ENCODE measurements at regions of chr20 and their contacts with region 1.

Region 1: DNA sequence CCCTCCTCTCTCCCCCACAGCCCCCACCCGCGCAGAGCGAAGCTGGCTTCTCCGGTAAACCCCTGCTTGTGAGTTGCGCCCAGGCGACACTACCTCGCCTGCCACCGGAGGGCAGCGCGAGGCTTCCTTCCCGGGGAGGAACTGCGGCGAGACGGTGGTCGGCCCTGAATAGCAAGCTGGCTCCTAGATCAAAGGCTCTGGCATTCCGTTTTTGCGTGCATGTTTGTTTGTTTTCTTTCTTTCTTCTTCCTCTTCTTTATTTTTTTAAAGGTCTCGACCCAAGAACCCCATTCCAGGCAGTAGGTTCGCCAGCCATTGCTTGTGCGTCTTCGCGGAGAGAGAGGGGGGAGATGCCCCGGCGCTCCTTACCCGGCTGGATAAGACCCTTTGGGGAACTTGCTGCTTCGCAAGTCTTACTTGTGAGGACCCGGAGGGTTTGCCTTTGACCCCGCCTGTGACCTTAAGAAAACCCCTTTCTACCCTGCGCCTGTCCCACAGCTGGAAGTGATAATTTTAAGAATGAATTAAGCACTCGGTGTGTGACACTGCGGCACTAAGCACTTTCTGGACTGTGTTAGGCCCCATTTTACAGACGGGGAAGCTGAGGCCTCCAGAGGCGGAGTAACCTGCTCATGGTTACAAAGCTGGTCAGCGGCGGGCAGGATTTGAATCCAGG is 92.7 kb upstream of the SIRPA start:
- DNase-seq: peak; percentile 79 to 80
- H3K4me3 ChIP-seq: peak overlapping the region; percentile 64
- H3K4me3 Mint-ChIP-seq: peak overlapping the region; percentile 74
- H3K27ac Mint-ChIP-seq: no peak overlapping the region
- H3K4me1 ChIP-seq: peaks cover 34% of the 10 kb centered on the region
- H3K4me1 Mint-ChIP-seq: peaks cover 31% of the 10 kb centered on the region
- H3K27me3 ChIP-seq: no peaks in the 10 kb centered on the region
- H3K27me3 Mint-ChIP-seq: no peaks in the 10 kb centered on the region
- CTCF ChIP-seq: peak; percentile 78 to 94

Region 2: DNA sequence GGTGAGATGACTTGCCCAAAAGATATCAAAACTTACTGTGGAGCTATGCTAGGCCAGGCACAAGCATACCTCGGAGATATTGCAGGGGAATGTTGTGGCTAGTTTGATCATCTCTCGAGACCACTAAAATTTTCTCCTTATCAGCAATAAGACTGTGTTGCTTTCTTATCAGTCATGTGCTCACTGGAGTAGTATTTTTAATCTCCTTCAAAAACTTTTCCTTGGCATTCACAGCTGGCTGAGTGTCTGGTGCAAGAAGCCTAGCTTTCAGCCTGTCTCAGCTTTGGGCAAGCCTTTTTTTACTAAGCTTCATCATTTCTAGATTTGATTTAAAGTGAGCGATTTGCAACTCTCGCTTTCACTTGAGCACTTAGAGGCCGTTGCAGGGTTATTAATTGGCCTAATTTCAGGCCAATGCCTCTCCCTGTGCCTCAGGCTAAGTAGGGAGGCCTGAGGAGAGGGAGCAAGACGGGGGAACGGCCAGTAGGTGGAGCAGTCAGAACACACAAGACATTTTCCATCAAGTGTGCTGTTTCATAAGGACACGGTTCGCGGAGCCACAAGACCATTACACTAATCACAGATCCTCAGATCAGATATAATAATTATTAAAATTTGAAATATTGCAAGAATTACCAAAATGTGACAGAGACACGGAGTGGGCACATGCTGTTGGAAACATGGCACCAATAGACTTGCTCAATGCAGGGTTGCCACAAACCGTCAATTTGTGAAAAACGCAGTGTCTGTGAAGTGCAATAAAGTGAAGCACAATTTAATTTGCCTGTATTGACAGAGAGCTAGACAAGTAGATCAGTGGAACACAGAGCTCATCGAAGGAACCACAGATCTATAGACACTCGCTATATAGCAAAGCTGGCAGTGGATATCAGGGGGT is 38.1 kb before region 1 on chr20:
- CTCF ChIA-PET with region 1: no interaction called
- POLR2A ChIA-PET with region 1: no interaction called
- intact Hi-C with region 1: loop called (anchors 1 kb)
- DNase-seq: peak; percentile 77 to 83
- H3K4me3 ChIP-seq: no peak overlapping the region
- H3K4me3 Mint-ChIP-seq: no peak overlapping the region
- H3K27ac Mint-ChIP-seq: no peak overlapping the region
- H3K4me1 ChIP-seq: no peaks in the 10 kb centered on the region
- H3K4me1 Mint-ChIP-seq: no peaks in the 10 kb centered on the region
- H3K27me3 ChIP-seq: no peaks in the 10 kb centered on the region
- H3K27me3 Mint-ChIP-seq: peaks cover 9% of the 10 kb centered on the region
- CTCF ChIP-seq: peak; percentile 80 to 92

Region 3: DNA sequence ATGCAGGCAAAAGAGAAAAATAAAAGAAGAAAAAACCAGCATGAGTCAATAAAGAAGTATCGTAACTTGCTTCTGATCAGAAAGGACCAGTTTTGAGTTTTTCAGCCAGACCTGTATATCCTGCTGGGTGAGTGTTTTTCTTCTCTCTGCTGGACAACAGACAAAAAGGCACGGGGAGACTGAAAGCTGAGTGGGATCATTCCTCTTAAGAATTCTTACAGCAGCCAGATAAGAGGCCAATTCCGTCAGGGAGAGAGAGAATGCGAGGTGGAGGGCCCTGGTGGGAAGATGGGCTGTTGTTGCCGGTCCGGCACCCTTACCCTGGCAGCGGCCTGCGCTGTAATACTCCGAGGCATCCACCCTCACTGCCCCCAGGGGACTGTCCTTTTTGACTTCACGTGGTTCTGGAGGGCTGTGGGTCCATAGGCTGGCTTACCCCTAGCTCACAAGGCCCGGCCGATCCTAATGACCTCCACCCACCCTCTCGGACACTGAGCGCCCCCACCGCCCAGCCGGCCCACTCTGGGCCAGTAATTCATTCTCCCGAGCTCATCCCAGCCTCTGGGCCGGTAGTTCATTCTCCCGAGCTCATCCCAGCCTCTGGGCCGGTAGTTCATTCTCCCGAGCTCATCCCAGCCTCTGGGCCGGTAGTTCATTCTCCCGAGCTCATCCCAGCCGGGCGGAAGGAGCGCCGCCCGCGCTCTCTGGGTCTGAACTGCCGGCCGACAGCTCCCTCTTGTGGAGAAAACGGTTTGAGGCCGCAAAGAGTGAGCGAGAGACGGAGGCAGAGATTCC is 25.6 kb before region 1 on chr20:
- CTCF ChIA-PET with region 1: interaction called, 23 read pairs
- POLR2A ChIA-PET with region 1: no interaction called
- intact Hi-C with region 1: loop called (anchors 1 kb)
- DNase-seq: peak; percentile 88 to 94
- H3K4me3 ChIP-seq: peak overlapping the region; percentile 47
- H3K4me3 Mint-ChIP-seq: peak overlapping the region; percentile 69
- H3K27ac Mint-ChIP-seq: peak overlapping the region; percentile 51
- H3K4me1 ChIP-seq: peaks cover 18% of the 10 kb centered on the region; the same call in 1 of the 2 replicates
- H3K4me1 Mint-ChIP-seq: peaks cover 21% of the 10 kb centered on the region
- H3K27me3 ChIP-seq: no peaks in the 10 kb centered on the region
- H3K27me3 Mint-ChIP-seq: peaks cover 6% of the 10 kb centered on the region
- CTCF ChIP-seq: peak; percentile 82 to 90

Region 4: DNA sequence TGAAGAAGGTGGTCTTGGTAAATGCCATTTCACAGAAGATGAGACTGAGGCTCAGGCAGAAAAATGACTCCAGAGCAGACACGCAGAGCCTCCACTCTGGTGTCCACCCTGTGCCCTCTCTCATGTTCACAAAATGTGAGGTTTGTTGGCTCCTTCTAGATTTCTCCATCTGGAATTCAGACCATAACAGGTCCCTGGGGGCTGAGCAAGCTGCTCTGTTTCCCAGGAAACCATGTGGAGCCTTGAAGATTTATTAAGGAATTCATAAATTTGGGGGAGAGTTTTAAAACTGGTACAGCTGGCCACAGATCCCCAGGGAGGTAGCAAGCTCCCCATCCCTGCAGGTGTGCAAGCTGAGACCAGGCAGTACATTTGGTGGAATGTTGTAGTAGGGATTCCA is 53.9 kb after region 1 on chr20:
- CTCF ChIA-PET with region 1: interaction called, 14 read pairs
- POLR2A ChIA-PET with region 1: interaction called, 3 read pairs
- intact Hi-C with region 1: loop called (anchors 1 kb)
- DNase-seq: no peak
- H3K4me3 ChIP-seq: no peak overlapping the region
- H3K4me3 Mint-ChIP-seq: no peak overlapping the region
- H3K27ac Mint-ChIP-seq: peak overlapping the region; percentile 74
- H3K4me1 ChIP-seq: peaks cover 53% of the 10 kb centered on the region
- H3K4me1 Mint-ChIP-seq: peaks cover 36% of the 10 kb centered on the region
- H3K27me3 ChIP-seq: no peaks in the 10 kb centered on the region
- H3K27me3 Mint-ChIP-seq: no peaks in the 10 kb centered on the region
- CTCF ChIP-seq: no peak

Region 5: DNA sequence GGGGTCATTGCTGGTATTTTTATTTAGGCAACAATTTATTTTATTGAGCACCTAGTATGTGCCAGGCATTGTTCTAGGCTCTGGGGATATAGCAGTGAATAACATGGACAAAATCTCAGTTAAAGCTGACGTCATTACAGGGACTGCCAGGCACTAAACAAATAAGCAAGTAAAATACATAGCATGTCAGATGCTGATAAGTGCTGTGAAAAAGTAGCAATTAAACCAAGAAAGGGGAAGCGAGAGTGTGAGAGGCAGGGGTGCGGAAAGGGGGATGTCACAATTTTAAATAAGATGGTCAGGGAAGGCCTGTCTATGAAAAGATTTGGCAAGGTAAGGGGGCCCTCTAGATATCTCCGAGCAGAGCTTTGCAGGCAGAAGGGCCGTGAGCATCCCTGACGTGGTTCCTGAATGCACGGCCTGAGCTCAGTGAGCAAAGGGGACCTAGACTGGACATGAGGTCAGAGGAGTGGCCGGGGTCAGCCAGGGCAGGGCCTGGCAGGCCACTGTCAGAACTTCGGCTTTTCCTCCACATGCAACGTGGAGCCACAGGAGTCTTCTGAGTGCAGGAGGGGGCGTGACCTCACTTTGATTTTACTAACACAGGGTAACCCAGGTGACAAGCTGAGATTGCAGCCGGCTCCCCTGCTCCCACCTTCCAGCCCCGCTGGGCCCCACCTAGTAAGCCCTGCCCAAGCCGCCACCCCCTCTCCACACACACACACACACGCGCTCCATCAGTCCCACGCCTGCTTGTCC is 68.4 kb after region 1 on chr20:
- CTCF ChIA-PET with region 1: no interaction called
- POLR2A ChIA-PET with region 1: no interaction called
- intact Hi-C with region 1: loop called (anchors 5 kb)
- DNase-seq: peak in 1 of 2 experiments; percentile 32
- H3K4me3 ChIP-seq: no peak overlapping the region
- H3K4me3 Mint-ChIP-seq: no peak overlapping the region
- H3K27ac Mint-ChIP-seq: no peak overlapping the region
- H3K4me1 ChIP-seq: peaks cover 50% of the 10 kb centered on the region
- H3K4me1 Mint-ChIP-seq: peaks cover 34% of the 10 kb centered on the region
- H3K27me3 ChIP-seq: no peaks in the 10 kb centered on the region
- H3K27me3 Mint-ChIP-seq: no peaks in the 10 kb centered on the region
- CTCF ChIP-seq: no peak

Region 6: GRCh38 chr20:1900321-1900801 is 97.8 kb after region 1 on chr20:
- CTCF ChIA-PET with region 1: interaction called, 3 read pairs
- POLR2A ChIA-PET with region 1: no interaction called
- intact Hi-C with region 1: loop called (anchors 2 kb)
- DNase-seq: peak; percentile 79 to 81
- H3K4me3 ChIP-seq: no peak overlapping the region
- H3K4me3 Mint-ChIP-seq: no peak overlapping the region
- H3K27ac Mint-ChIP-seq: no peak overlapping the region
- H3K4me1 ChIP-seq: peaks cover 29% of the 10 kb centered on the region
- H3K4me1 Mint-ChIP-seq: peaks cover 25% of the 10 kb centered on the region
- H3K27me3 ChIP-seq: no peaks in the 10 kb centered on the region
- H3K27me3 Mint-ChIP-seq: no peaks in the 10 kb centered on the region
- CTCF ChIP-seq: peak; percentile 66 to 92

Region 7: DNA sequence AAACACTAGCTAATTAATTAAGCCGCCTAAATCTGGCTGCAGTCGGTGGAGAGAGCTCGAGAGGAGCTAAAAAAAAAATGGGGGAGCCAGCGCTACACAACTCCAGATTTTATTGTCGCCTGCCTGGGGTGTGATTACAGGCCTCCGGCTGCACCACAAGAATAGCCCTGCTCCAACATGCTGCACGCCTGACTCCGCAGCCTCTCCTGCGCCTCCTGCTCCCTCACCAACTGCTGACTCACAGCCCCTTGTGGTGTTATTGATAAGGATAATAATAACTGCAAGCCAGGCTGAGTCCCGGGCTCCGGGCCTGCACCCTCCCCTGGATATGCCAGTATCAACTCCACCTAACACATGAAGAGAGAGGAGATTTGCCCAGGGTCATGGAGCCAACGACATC is 109.5 kb after region 1 on chr20:
- CTCF ChIA-PET with region 1: no interaction called
- POLR2A ChIA-PET with region 1: no interaction called
- intact Hi-C with region 1: no loop called
- DNase-seq: no peak
- H3K4me3 ChIP-seq: no peak overlapping the region
- H3K4me3 Mint-ChIP-seq: no peak overlapping the region
- H3K27ac Mint-ChIP-seq: no peak overlapping the region
- H3K4me1 ChIP-seq: no peaks in the 10 kb centered on the region; the same call in 1 of the 2 replicates
- H3K4me1 Mint-ChIP-seq: peaks cover 7% of the 10 kb centered on the region
- H3K27me3 ChIP-seq: no peaks in the 10 kb centered on the region
- H3K27me3 Mint-ChIP-seq: no peaks in the 10 kb centered on the region
- CTCF ChIP-seq: no peak

Region 8: DNA sequence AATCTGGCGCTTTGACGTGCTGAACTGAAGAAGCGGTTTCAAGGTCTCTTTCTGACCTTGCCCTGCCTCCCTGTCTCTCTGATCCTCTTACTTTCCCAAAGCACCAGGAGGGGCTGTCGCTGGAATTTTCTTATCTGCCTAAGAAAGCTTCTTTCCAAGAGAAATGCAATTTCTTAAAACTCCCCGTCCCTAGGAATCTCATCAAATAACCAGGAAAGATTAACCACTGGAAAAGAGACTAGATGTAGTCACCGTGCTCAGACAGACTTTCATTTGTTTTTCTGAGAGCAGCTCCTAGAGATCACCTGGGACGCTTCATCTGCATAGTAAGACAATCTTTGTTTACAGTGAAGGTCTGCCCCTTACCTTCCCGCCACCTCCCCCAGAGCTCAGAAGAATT is 152.7 kb after region 1 on chr20:
- CTCF ChIA-PET with region 1: no interaction called
- POLR2A ChIA-PET with region 1: no interaction called
- intact Hi-C with region 1: loop called (anchors 5 kb)
- DNase-seq: no peak
- H3K4me3 ChIP-seq: no peak overlapping the region
- H3K4me3 Mint-ChIP-seq: no peak overlapping the region
- H3K27ac Mint-ChIP-seq: no peak overlapping the region
- H3K4me1 ChIP-seq: 0 out of 2 replicates have a peak, but pooled peaks cover 4% of the 10 kb centered on the region
- H3K4me1 Mint-ChIP-seq: peaks cover 6% of the 10 kb centered on the region
- H3K27me3 ChIP-seq: no peaks in the 10 kb centered on the region
- H3K27me3 Mint-ChIP-seq: no peaks in the 10 kb centered on the region
- CTCF ChIP-seq: no peak